ENCODE measurements at regions of chr1 and their contacts with region 1.

Region 1: GRCh38 chr1:182262425-182262824 is 129.2 kb downstream of the GLUL start:
- DNase-seq: no peak
- ATAC-seq: no peak
- H3K4me3 ChIP-seq: no peak overlapping the region
- H3K4me3 Mint-ChIP-seq: no peak overlapping the region
- H3K27ac ChIP-seq: no peak overlapping the region
- H3K27ac Mint-ChIP-seq: no peak overlapping the region
- H3K4me1 ChIP-seq: peaks cover 32% of the 10 kb centered on the region
- H3K4me1 Mint-ChIP-seq: peaks cover 33% of the 10 kb centered on the region
- H3K27me3 ChIP-seq: no peaks in the 10 kb centered on the region
- H3K27me3 Mint-ChIP-seq: no peaks in the 10 kb centered on the region
- CTCF ChIP-seq: no peak

Region 2: GRCh38 chr1:182299728-182300616 is 37.5 kb after region 1 on chr1:
- CTCF ChIA-PET with region 1: no interaction called
- POLR2A ChIA-PET with region 1: no interaction called
- intact Hi-C with region 1: loop called in 1 of 2 experiments (anchors 2 kb)
- DNase-seq: peak in 3 of 9 experiments; percentile 13 to 37 (median 36)
- ATAC-seq: peak; percentile 47
- H3K4me3 ChIP-seq: no peak overlapping the region
- H3K4me3 Mint-ChIP-seq: no peak overlapping the region
- H3K27ac ChIP-seq: no peak overlapping the region
- H3K27ac Mint-ChIP-seq: peak overlapping the region; percentile 15
- H3K4me1 ChIP-seq: peaks cover 3% of the 10 kb centered on the region
- H3K4me1 Mint-ChIP-seq: peaks cover 25% of the 10 kb centered on the region
- H3K27me3 ChIP-seq: no peaks in the 10 kb centered on the region
- H3K27me3 Mint-ChIP-seq: no peaks in the 10 kb centered on the region
- CTCF ChIP-seq: no peak

Region 3: GRCh38 chr1:182391362-182392044 is 129.1 kb after region 1 on chr1 and contains the start of gene GLUL:
- CTCF ChIA-PET with region 1: no interaction called
- POLR2A ChIA-PET with region 1: interaction called, 3 read pairs
- intact Hi-C with region 1: loop called in 1 of 2 experiments (anchors 5 kb)
- DNase-seq: peak; percentile 24 to 80 (median 55)
- ATAC-seq: peak; percentile 64
- H3K4me3 ChIP-seq: peak within 1 kb of the TSS; percentile 62 to 76
- H3K4me3 Mint-ChIP-seq: peak within 1 kb of the TSS; percentile 92
- H3K27ac ChIP-seq: peak within 1 kb of the TSS; percentile 32 to 36
- H3K27ac Mint-ChIP-seq: peak within 1 kb of the TSS; percentile 80
- H3K4me1 ChIP-seq: peaks cover 13% of the 10 kb centered on the region
- H3K4me1 Mint-ChIP-seq: peaks cover 25% of the 10 kb centered on the region
- H3K27me3 ChIP-seq: peaks cover 0 to 2% of the 10 kb centered on the region in 2 experiments
- H3K27me3 Mint-ChIP-seq: peaks cover 19% of the 10 kb centered on the region
- CTCF ChIP-seq: no peak
- total RNA-seq, gene GLUL: 27.3 to 29.7 TPM

Measured in CD8-positive, alpha-beta T cell (primary cell).